Heart left ventricle (tissue), 16 donors: ENCODE measurements at regions of chr4 and their contacts with region 1.

Region 1: DNA sequence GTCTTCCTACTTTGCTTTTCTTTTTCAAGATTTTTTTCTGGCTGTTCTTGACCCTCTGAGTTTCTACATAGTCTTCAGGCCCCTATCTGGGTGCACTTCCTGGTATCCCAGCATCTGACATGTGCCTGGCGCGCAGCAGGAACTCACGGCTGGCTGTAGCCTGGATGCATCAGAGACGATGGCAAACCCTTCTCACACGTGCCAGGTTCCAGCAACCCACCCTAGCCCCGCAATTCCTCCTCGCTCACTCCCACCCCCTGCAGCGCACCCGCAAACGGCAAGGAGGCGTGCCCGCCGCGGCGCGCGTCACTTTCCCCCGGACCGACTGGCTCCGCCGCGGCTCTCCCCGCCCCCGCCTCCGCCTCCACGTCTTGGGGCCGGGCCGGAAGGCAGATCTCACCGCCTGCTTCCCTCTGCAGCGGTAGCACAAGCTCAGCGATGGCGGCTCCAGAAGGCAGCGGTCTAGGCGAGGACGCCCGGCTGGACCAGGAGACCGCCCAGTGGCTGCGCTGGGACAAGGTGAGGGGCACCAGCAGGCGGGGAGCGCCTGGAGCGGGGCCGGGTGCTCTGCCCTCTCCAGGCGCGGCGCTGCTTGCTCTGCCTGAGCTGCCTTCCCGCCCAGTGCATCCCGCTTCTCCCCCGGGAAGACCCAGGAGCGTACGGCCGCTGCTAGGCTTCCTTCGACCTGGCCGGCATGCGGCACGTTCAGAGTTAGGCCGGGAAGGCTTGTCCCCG is at the start of gene PGM2:
- DNase-seq: peak; percentile 92 to 95 (median 93)
- ATAC-seq: peak; percentile 86 to 97 (median 96)
- H3K4me3 ChIP-seq: peak within 1 kb of the TSS; percentile 54 to 97 (median 88)
- H3K27ac ChIP-seq: peak within 1 kb of the TSS; percentile 55 to 95 (median 90)
- H3K4me1 ChIP-seq: peaks cover 3 to 43% (median 20%) of the 10 kb centered on the region in 12 donors
- H3K27me3 ChIP-seq: no peaks in the 10 kb centered on the region
- CTCF ChIP-seq: peak in 4 of 12 donors; percentile 6 to 31 (median 24)
- POLR2A ChIP-seq: peak in 1 of 2 donors; percentile 89
- total RNA-seq, gene PGM2: 6.8 to 18.4 (median 8.7) TPM

Region 2: GRCh38 chr4:37864786-37865185 is 38.3 kb after region 1 on chr4:
- intact Hi-C with region 1: loop called in 1 of 10 experiments (anchors 5 kb)
- DNase-seq: no peak
- ATAC-seq: peak in 3 of 4 donors; percentile 40 to 53 (median 46)
- H3K4me3 ChIP-seq: no peak overlapping the region
- H3K27ac ChIP-seq: peak overlapping the region in 11 of 12 donors; percentile 6 to 77 (median 59)
- H3K4me1 ChIP-seq: peaks cover 0 to 34% (median 14%) of the 10 kb centered on the region in 12 donors
- H3K27me3 ChIP-seq: no peaks in the 10 kb centered on the region
- CTCF ChIP-seq: no peak
- POLR2A ChIP-seq: no peak

Region 3: DNA sequence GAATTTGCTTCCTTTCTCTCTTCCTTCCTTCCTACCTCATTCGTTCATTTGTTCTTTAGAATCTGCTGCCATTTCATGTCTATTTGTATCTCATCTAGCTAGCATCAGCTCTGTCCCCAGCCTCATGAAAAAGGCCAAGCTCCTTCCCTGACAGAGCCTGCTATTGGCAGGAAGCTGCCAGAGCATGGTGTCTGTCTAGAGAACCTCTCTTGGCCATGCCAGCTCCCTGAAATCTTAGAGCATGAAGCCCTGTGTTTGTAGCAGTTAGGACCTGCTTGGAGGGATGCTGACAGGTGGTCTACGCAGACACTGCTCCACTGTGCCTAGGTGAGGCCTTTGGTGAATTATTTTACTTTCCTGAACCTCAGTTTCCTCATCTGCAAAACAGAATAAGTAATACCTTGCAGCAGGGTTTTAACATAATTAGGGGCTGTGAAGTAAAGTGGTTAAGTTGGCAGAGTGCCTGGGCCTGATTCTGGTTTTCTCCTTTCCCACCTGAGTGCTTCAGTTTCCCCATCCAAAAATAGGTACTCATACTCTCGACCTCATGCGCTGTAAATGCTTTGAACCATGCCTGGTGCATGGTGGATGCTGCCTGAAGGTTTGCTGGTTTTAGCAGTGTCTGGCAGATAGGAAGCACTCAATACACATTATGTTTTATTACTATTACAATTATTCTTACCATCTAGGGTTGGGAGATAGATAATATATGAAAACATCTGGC is 138.4 kb after region 1 on chr4:
- intact Hi-C with region 1: loop called in 2 of 10 experiments (anchors 5 to 10 kb)
- DNase-seq: no peak
- ATAC-seq: peak in 1 of 4 donors; percentile 36
- H3K4me3 ChIP-seq: no peak overlapping the region
- H3K27ac ChIP-seq: peak overlapping the region in 1 of 12 donors; percentile 38
- H3K4me1 ChIP-seq: peaks cover 0 to 35% (median 9%) of the 10 kb centered on the region in 12 donors
- H3K27me3 ChIP-seq: no peaks in the 10 kb centered on the region
- CTCF ChIP-seq: no peak
- POLR2A ChIP-seq: no peak